Naive thymus-derived CD4-positive, alpha-beta T cell (primary cell): ENCODE measurements at regions of chr7 and their contacts with region 1.

Region 1: DNA sequence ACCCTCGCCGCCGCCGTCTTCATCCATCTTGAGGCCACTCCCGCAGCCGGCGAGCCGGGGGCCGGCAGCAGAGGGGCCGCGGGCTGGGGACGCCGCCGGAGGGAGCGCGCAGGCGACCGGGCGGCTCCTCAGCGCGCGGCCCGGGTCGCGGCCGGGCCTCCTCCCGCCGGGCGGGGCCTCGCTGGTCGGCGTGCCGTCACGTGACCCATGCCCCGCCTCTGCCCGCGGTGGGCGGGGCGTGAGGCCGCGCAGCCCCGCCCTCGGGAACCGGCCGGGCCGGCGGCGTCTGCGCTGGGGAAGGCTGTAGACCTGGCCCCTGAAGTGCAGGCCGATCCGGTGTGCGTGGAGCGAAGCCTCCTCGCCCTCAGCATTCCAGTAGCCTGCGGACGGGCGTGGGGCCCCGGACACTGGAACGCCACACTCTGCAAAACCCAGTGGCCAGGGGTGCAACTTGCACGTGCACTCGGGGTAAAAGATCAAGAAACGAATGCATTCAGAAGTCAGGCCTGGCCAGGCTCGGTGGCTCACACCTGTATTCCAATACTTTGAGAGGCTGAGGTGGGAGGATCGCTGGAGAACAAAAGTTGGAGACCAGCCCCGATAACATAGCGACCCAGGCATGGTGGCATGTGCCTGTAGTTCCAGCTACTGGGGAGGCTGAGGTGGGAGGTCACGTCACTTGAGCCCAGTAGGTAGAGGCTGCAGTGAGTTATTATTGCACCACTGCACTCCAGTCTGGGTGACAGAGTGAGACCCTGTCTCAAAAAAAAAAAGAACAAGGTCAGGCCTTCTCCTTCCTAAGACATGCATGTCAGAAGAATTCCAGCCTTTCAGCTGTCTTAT is at the start of gene CYTH3:
- DNase-seq: peak; percentile 47 to 92 (median 74)
- ATAC-seq: peak; percentile 97
- H3K4me3 ChIP-seq: peak within 1 kb of the TSS; percentile 69
- H3K4me3 Mint-ChIP-seq: peak within 1 kb of the TSS; percentile 79 to 96 (median 92)
- H3K27ac ChIP-seq: peak within 1 kb of the TSS; percentile 46
- H3K27ac Mint-ChIP-seq: peak within 1 kb of the TSS in 7 of 9 donors; percentile 31 to 83 (median 67)
- H3K4me1 ChIP-seq: peaks cover 10 to 18% of the 10 kb centered on the region in 2 donors
- H3K4me1 Mint-ChIP-seq: peaks cover 15 to 30% (median 19%) of the 10 kb centered on the region in 7 donors
- H3K27me3 ChIP-seq: no peaks in the 10 kb centered on the region
- H3K27me3 Mint-ChIP-seq: peaks cover 0 to 64% (median 12%) of the 10 kb centered on the region in 5 donors
- total RNA-seq, gene CYTH3: 0.99 to 9.5 (median 3.6) TPM

Region 2: DNA sequence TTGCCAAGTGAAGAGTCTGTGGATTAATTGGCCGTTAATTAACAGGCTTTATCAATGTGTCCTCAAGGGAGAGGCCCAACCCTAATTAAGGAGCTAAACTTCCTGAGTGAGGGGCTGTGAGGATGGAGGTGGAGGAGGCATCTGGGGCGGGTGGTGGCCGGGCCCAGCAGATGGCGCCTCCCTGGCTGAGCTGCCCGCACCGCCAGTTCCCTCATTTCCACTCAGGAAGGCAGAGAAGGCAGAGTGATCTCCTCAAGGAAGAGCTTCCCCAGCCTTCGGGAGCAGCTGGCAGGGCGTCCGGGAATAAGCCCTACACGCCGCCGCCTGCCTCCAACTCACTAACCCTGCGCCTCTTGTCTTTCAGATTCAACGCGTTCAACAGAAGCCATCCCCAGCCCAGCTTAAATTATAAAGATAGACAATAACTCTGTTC is 112.5 kb before region 1 on chr7:
- CTCF ChIA-PET with region 1: no interaction called
- POLR2A ChIA-PET with region 1: no interaction called
- intact Hi-C with region 1: loop called in 1 of 2 experiments (anchors 5 kb)
- DNase-seq: peak in 1 of 9 donors; percentile 10
- ATAC-seq: peak; percentile 42
- H3K4me3 ChIP-seq: no peak overlapping the region
- H3K4me3 Mint-ChIP-seq: no peak overlapping the region
- H3K27ac ChIP-seq: no peak overlapping the region
- H3K27ac Mint-ChIP-seq: peak overlapping the region in 1 of 9 donors; percentile 22
- H3K4me1 ChIP-seq: no peaks in the 10 kb centered on the region
- H3K4me1 Mint-ChIP-seq: peaks cover 0 to 11% (median 0%) of the 10 kb centered on the region in 7 donors
- H3K27me3 ChIP-seq: no peaks in the 10 kb centered on the region
- H3K27me3 Mint-ChIP-seq: no peaks in the 10 kb centered on the region

Region 3: GRCh38 chr7:6258440-6259182 is 14.1 kb before region 1 on chr7:
- CTCF ChIA-PET with region 1: interaction called, 3 read pairs
- POLR2A ChIA-PET with region 1: interaction called, 3 read pairs
- intact Hi-C with region 1: loop called in 1 of 2 experiments (anchors 2 kb)
- DNase-seq: no peak
- ATAC-seq: no peak
- H3K4me3 ChIP-seq: no peak overlapping the region
- H3K4me3 Mint-ChIP-seq: no peak overlapping the region
- H3K27ac ChIP-seq: no peak overlapping the region
- H3K27ac Mint-ChIP-seq: no peak overlapping the region
- H3K4me1 ChIP-seq: peaks cover 0 to 25% of the 10 kb centered on the region in 2 donors
- H3K4me1 Mint-ChIP-seq: peaks cover 19 to 37% (median 29%) of the 10 kb centered on the region in 7 donors
- H3K27me3 ChIP-seq: no peaks in the 10 kb centered on the region
- H3K27me3 Mint-ChIP-seq: peaks cover 0 to 65% (median 0%) of the 10 kb centered on the region in 5 donors

Region 4: DNA sequence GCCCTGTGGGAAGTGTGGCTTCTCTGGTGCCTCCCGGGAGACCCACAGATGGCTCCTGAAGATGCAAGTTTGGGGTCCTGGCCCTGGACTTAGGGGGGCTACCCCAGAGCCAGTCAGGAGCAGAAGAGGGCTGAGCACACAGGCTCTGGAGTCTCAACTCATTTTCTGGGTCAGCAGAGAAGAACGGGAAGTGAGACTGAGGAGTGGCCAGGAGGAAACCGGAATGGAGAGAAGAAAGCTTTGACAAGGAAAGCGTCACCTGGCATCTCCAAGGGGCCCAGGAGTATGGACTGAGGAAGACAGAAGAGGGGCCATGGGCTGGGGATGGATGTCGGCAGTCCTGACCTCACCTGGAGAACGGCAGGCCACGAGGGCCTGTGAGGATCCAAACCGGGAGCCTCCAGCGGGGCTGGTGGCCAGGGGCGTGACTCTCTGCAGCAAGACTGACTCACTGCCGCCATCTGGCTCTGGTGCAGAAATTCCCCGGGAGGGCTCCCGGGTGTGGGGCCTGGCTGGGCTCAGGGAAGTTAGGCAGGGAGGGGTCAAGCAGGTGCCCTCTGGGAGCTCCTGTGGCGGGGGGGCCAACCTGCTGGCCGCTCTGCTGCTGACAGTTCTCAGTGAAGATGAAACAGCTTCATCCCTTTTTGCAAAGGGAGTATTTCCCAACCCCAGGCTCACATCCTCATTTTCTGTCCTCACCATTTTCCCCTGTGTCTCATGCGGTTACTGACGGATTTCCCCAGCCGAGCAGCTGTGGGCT is 151.4 kb after region 1 on chr7:
- CTCF ChIA-PET with region 1: no interaction called
- POLR2A ChIA-PET with region 1: no interaction called
- intact Hi-C with region 1: no loop called
- DNase-seq: no peak
- ATAC-seq: peak; percentile 70
- H3K4me3 ChIP-seq: no peak overlapping the region
- H3K4me3 Mint-ChIP-seq: peak overlapping the region in 1 of 10 donors; percentile 64
- H3K27ac ChIP-seq: no peak overlapping the region
- H3K27ac Mint-ChIP-seq: peak overlapping the region in 4 of 9 donors; percentile 38 to 75 (median 52)
- H3K4me1 ChIP-seq: no peaks in the 10 kb centered on the region
- H3K4me1 Mint-ChIP-seq: peaks cover 3 to 15% (median 10%) of the 10 kb centered on the region in 7 donors
- H3K27me3 ChIP-seq: no peaks in the 10 kb centered on the region
- H3K27me3 Mint-ChIP-seq: no peaks in the 10 kb centered on the region

Region 5: DNA sequence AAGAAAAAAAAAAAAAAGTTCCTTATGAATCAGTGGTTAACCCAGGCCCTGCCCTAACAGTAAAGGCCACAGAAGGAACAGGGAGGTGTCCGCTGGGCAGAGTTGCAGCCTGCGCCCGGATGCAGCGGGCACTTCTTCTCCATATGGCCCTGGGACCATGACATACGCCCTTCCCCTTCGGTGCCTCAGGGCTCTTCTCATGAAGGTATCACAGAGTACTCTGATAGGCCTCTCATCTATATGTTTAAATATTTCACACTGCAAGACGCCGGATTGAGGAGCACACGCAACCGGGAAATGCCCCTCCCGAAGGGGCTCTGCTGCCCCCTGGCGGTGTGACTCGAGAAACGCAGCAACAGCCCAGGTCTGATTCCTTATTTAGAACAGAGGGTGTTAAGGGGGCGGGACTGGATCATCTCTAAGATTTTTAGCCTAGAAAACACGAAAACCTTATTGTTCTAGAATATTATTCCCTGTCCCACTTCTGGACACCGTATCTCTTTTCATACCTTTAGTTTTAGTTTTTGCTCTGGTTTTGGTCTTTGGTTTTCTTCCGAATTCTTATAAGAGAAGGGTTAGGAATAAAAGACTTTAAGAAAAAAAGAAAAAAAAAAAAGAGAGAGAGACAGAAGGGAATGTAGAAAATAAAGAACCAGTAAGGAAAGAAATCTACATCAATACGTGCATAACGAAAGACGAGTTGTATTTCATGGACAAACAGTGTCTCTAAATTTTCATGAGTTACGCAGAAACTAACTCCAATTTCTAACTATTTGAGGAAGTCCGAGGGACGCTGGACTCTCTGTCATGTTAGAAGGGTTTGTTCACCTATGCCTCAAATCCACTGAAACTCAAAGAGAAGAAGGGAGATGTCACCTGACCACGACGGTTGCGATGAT is 163.0 kb after region 1 on chr7:
- CTCF ChIA-PET with region 1: no interaction called
- POLR2A ChIA-PET with region 1: interaction called, 3 read pairs
- intact Hi-C with region 1: loop called in 1 of 2 experiments (anchors 5 kb)
- DNase-seq: peak; percentile 80 to 95 (median 89)
- ATAC-seq: peak; percentile 96
- H3K4me3 ChIP-seq: peak overlapping the region; percentile 34
- H3K4me3 Mint-ChIP-seq: peak overlapping the region; percentile 75 to 90 (median 84)
- H3K27ac ChIP-seq: peak overlapping the region; percentile 70
- H3K27ac Mint-ChIP-seq: peak overlapping the region; percentile 81 to 97 (median 91)
- H3K4me1 ChIP-seq: peaks cover 6 to 27% of the 10 kb centered on the region in 2 donors
- H3K4me1 Mint-ChIP-seq: peaks cover 29 to 59% (median 53%) of the 10 kb centered on the region in 7 donors
- H3K27me3 ChIP-seq: no peaks in the 10 kb centered on the region
- H3K27me3 Mint-ChIP-seq: no peaks in the 10 kb centered on the region

Region 6: GRCh38 chr7:6536262-6537260 is 263.9 kb after region 1 on chr7:
- CTCF ChIA-PET with region 1: no interaction called
- POLR2A ChIA-PET with region 1: no interaction called
- intact Hi-C with region 1: no loop called
- DNase-seq: no peak
- ATAC-seq: peak; percentile 26
- H3K4me3 ChIP-seq: no peak overlapping the region
- H3K4me3 Mint-ChIP-seq: peak overlapping the region in 4 of 10 donors; percentile 43 to 68 (median 58)
- H3K27ac ChIP-seq: no peak overlapping the region
- H3K27ac Mint-ChIP-seq: no peak overlapping the region
- H3K4me1 ChIP-seq: no peaks in the 10 kb centered on the region
- H3K4me1 Mint-ChIP-seq: peaks cover 0 to 7% (median 4%) of the 10 kb centered on the region in 7 donors
- H3K27me3 ChIP-seq: no peaks in the 10 kb centered on the region
- H3K27me3 Mint-ChIP-seq: peaks cover 9 to 31% (median 15%) of the 10 kb centered on the region in 5 donors